Endothelial cell of umbilical vein (primary cell): ENCODE measurements at regions of chr22 and their contacts with region 1.

Region 1: DNA sequence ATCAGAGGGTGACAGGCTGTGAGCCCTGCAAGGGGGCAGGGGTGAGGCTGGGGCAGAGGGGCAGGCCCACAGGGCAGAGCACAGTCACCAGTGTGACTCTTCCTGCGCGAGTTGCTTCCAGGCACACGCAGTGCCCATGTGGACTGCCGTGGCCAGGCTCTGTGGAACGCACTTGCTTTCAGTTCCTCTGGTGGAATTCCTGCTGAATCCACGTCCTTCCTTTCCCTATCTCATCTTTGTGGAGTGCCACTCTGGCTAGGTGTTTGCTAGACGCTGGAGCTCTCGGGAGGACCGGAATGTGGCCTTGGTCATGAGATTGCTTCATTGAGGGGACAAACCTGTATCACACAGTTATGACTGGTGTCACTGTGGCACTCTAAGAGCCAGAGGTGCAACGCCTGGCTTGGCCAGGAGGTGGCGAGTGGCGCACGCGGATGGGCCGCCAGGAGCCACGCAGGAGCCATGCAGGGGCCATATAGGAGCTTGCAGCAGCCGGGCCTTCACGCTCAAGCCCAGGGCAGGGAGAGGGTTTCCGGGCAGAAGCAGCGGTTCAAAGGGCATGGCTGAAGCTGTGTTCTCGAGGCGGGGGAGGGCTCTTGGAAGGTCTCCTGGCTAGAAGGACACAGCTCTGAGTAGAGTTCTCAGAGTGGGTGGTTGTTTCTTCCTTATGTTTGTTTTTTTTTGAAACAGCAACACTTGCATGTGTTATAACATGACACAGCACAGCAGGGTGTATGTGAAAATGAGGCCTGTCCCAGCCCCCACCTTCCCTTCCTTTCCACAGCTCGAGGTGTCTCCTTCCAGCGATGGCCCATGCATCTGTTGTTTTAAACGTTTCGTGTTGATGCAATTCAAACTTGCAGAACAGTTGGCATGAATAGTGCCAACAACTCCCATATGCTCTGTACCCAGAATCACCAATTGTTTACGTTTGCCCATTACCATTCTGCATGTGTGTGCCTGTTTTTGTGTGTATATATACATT is 36.2 kb downstream of the TBC1D22A start:
- DNase-seq: peak; percentile 81
- H3K4me3 ChIP-seq: no peak overlapping the region
- H3K27ac ChIP-seq: no peak overlapping the region
- H3K4me1 ChIP-seq: peaks cover 5% of the 10 kb centered on the region
- H3K27me3 ChIP-seq: no peaks in the 10 kb centered on the region
- CTCF ChIP-seq: peak; percentile 96 to 98
- POLR2A ChIP-seq: no peak

Region 2: DNA sequence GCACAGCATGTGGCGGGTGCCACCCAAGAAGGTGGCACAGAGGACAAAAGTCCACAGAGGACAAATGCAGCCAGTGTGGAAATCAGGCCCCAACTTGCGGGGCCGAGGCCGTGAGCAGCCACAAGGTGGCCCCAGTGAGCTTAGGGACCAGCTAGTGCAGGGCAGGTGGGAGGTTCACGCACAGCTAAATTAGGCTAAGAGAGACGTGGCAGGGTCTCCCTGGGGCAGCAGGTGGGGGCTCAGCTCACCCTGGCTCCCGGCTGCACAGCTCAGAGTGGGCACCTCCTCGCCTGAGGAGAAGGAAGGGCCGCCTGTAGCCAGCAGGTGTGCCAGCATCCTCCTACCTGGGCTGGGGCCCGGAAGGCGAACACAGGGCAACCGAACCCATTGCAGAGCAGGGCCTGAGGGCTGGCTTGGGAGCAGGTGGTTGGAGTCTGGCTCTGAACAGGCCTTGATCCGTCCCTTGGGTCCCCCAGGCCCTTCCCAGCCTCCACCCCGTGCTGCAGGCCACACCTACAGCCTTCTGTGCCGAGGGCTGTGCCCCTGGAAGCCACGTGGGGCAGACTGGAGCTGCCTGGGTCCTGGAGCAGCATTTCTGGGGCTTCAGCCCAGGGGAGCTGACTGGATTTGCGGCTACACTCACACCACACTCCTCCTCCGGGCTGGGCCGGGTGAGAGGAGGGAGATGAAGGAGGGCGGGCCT is 235.1 kb before region 1 on chr22:
- CTCF ChIA-PET with region 1: interaction called, 3 read pairs
- POLR2A ChIA-PET with region 1: no interaction called
- dilution Hi-C with region 1: no loop called
- intact Hi-C with region 1: loop called (anchors 5 kb)
- DNase-seq: peak; percentile 48
- H3K4me3 ChIP-seq: no peak overlapping the region
- H3K27ac ChIP-seq: no peak overlapping the region
- H3K4me1 ChIP-seq: no peaks in the 10 kb centered on the region
- H3K27me3 ChIP-seq: no peaks in the 10 kb centered on the region
- CTCF ChIP-seq: peak; percentile 77 to 93
- POLR2A ChIP-seq: no peak

Region 3: DNA sequence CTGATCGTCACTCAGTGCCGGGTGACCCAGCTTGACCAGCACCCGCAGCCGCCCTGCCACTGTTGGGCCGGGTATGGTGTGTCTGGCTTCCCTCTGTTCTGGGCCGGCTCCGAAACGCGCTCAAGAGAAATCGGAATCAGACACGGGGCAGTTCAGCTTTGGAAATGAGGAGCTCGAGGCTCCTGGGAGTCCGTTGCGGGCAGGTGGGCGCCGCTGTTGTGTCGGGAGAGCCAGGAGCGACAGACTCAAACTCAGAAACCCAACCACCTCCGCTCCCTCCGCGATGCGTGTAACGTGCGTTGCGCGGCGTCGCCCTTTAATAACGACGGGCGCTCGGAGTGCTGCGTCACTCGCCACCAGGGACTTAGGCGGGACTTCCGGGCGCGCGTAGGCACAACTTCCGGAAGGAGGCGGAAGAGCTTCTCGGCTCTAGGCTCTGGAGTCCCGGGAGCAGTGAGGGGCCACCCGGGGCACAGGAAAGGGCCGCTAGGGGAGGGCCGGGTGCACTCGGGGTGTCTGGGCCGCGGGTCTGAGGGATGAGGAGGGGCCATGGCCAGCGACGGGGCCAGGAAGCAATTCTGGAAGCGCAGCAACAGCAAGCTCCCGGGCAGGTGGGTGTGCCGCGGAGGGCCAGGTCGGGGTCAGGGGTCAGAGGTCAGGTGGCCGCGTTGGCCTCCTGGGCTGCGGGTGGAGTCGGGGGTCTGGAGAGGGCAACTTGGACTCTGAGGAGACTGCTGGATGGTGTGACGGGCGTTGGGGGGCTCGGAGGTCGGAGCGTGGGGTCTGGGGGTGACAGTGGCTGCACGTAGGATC is 36.2 kb before region 1 on chr22 and contains the start of gene TBC1D22A:
- CTCF ChIA-PET with region 1: interaction called, 38 read pairs
- POLR2A ChIA-PET with region 1: interaction called, 3 read pairs
- dilution Hi-C with region 1: no loop called
- intact Hi-C with region 1: loop called (anchors 1 kb)
- DNase-seq: peak; percentile 94
- H3K4me3 ChIP-seq: peak within 1 kb of the TSS; percentile 74 to 87 (median 77)
- H3K27ac ChIP-seq: peak within 1 kb of the TSS; percentile 87
- H3K4me1 ChIP-seq: peaks cover 24% of the 10 kb centered on the region
- H3K27me3 ChIP-seq: no peaks in the 10 kb centered on the region
- CTCF ChIP-seq: no peak
- POLR2A ChIP-seq: peak; percentile 98
- total RNA-seq, gene TBC1D22A: 32.4 and 32.9 TPM in 2 replicates

Region 4: GRCh38 chr22:46829941-46830715 is 31.5 kb after region 1 on chr22:
- CTCF ChIA-PET with region 1: interaction called, 14 read pairs
- POLR2A ChIA-PET with region 1: no interaction called
- dilution Hi-C with region 1: no loop called
- intact Hi-C with region 1: loop called (anchors 2 kb)
- DNase-seq: peak; percentile 55
- H3K4me3 ChIP-seq: no peak overlapping the region
- H3K27ac ChIP-seq: peak overlapping the region; percentile 44
- H3K4me1 ChIP-seq: peaks cover 33% of the 10 kb centered on the region
- H3K27me3 ChIP-seq: no peaks in the 10 kb centered on the region
- CTCF ChIP-seq: no peak
- POLR2A ChIP-seq: no peak

Region 5: GRCh38 chr22:48492366-48493320 is 1694.0 kb after region 1 on chr22:
- CTCF ChIA-PET with region 1: interaction called, 24 read pairs
- POLR2A ChIA-PET with region 1: no interaction called
- dilution Hi-C with region 1: no loop called
- intact Hi-C with region 1: loop called (anchors 10 kb)
- DNase-seq: peak; percentile 66
- H3K4me3 ChIP-seq: no peak overlapping the region
- H3K27ac ChIP-seq: no peak overlapping the region
- H3K4me1 ChIP-seq: no peaks in the 10 kb centered on the region
- H3K27me3 ChIP-seq: peaks cover 22 to 29% of the 10 kb centered on the region in 2 experiments
- CTCF ChIP-seq: peak; percentile 67 to 78
- POLR2A ChIP-seq: no peak